Heart right ventricle (tissue), 16 donors: ENCODE measurements at regions of chr11 and their contacts with region 1.

Region 1: DNA sequence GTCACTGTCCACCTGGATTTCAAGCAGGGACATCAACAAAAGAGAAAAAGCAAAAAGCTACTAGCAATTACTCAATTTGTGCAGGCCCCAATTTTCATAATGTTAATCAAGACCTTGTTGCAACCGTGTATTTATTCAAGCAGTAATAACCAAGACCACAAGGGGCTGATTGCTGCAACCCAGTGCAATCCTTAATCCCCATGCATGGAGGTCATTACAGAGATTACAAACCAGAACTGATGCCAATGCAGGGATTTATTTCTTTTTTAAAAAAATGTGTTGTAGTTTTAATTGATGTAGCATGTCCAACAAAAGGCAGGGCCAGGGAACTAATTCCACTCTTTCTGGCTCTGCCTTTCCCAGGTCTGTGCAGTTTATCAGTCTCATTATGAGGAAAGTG is 18.4 kb downstream of the TECTA start:
- DNase-seq: no peak
- ATAC-seq: no peak
- H3K4me3 ChIP-seq: no peak overlapping the region
- H3K27ac ChIP-seq: no peak overlapping the region
- H3K4me1 ChIP-seq: no peaks in the 10 kb centered on the region
- H3K27me3 ChIP-seq: no peaks in the 10 kb centered on the region
- CTCF ChIP-seq: no peak

Region 2: GRCh38 chr11:121071846-121072450 is 47.5 kb before region 1 on chr11:
- intact Hi-C with region 1: loop called in 1 of 10 experiments (anchors 1 kb)
- DNase-seq: no peak
- ATAC-seq: no peak
- H3K4me3 ChIP-seq: no peak overlapping the region
- H3K27ac ChIP-seq: peak overlapping the region in 5 of 10 donors; percentile 11 to 71 (median 32)
- H3K4me1 ChIP-seq: peaks cover 0 to 22% (median 12%) of the 10 kb centered on the region in 9 donors
- H3K27me3 ChIP-seq: no peaks in the 10 kb centered on the region
- CTCF ChIP-seq: no peak

Region 3: DNA sequence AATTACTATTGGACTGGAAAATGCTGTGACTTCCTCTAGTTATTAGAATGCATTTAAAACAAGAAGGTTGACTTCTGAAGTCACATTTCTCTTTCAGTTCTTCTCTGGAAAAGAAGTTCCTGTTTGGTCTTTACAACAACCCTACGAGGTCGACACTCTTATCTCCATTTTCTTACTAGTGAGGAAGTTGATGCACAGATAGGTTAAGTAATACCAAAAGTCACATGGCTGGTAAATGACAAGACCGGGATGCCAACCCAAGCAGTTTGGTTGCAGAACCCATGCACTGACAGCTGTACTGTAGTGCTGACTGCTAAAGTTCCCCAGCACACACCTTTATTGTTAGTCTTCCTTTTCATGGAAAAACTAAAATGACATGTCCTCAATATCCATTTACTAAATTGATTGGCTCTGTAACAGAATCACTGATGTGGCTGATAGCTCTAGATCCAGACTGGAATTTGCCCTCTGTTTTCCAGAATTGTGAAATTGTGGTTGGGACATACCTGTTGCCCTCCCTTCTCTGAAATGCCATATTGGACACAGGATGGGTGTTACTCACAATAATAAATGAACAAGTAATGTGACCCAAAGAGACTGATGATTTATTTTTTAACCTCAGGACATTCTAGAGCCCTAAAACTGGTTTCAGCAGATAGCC is 27.8 kb before region 1 on chr11:
- intact Hi-C with region 1: no loop called
- DNase-seq: no peak
- ATAC-seq: no peak
- H3K4me3 ChIP-seq: no peak overlapping the region
- H3K27ac ChIP-seq: no peak overlapping the region
- H3K4me1 ChIP-seq: peaks cover 0 to 12% (median 0%) of the 10 kb centered on the region in 9 donors
- H3K27me3 ChIP-seq: no peaks in the 10 kb centered on the region
- CTCF ChIP-seq: no peak